HEK293T (cell line): ENCODE measurements at regions of chr19 and their contacts with region 1.

Region 1: DNA sequence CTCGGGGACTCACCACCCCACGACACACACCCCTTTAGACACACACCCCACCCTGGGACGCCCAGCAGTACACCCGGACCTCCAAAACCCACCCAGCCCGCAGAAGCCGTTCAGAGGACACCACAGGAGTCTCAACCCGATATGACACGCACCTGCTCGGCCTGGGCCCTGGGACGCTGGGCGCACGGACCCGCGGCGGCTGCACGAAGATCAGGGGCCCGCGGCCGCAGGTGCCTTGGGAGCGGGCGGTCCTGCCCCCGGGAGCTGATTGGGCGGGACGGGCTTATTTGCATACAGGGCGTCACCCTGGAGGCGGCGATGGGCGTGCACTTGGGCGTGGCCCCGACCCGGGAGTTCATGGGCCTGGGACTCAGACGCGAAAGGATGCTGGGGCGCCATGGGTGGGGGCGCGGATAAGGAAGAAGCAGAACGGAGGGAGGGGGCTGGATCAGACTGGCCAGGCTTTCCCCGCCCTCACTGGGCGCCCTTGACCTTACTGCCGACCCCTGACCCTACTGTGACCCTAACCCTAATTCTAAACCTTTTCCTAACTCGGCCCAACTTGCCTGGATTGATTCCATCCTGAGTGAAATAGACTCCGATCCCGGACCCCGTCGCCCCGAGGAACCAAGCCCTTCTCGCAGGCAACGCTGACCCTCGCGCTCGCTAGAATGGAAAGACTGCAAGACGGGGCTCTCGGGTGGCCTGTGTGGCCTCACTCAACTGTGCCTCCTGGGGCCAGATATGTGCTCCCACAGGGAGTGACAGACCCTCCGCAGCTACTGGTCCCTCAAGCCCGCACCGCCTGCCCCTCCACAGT is at the start of gene MEF2B:
- DNase-seq: peak; percentile 95

Region 2: DNA sequence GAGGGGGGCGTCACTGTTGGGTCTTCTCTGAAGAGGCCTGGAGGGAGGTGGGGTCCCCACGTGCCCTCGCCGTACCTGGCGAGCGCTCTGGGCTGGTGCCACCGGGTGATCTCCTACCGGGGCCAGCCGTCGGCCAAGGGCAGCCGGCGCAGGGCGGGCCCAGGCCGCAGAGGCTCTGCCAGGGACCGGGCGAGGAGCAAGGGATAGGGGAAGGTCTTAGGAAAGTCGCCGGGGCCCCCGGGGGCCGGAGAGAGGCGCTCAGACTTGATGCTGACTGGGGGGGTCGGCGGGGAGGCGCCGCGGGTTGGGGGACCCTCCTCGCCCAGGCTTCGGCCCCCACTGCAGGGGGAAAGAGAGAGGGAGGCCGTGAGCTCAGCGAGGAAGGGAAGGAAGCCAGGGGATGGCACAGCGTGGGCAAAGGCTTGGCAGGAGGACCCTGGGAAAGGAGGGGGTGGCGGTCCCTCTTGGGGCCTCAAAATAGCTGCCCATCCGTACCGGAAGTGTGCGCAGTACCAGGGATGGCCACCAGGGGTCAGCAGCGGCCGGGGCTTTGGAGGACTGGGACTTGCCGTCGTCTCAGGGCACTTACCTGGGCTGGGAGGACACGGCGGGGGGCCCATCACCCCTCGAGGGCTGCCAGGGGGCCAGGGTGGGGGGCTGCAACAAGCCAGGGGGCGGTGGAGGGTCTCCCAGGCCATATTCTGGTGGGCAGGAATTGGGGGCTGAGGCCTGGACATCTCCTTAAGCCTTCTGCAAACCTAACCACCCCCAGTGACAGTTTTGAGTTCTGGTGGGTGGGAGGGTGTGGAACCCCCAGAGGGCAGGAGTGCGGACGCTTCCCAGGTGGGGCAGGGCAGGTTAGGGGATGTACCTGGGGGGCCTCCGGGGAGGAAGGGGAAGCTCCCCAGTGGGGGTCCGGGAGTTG is 24.3 kb before region 1 on chr19:
- CTCF ChIA-PET with region 1: interaction called, 12 read pairs
- POLR2A ChIA-PET with region 1: interaction called, 4 read pairs
- DNase-seq: peak; percentile 82

Region 3: DNA sequence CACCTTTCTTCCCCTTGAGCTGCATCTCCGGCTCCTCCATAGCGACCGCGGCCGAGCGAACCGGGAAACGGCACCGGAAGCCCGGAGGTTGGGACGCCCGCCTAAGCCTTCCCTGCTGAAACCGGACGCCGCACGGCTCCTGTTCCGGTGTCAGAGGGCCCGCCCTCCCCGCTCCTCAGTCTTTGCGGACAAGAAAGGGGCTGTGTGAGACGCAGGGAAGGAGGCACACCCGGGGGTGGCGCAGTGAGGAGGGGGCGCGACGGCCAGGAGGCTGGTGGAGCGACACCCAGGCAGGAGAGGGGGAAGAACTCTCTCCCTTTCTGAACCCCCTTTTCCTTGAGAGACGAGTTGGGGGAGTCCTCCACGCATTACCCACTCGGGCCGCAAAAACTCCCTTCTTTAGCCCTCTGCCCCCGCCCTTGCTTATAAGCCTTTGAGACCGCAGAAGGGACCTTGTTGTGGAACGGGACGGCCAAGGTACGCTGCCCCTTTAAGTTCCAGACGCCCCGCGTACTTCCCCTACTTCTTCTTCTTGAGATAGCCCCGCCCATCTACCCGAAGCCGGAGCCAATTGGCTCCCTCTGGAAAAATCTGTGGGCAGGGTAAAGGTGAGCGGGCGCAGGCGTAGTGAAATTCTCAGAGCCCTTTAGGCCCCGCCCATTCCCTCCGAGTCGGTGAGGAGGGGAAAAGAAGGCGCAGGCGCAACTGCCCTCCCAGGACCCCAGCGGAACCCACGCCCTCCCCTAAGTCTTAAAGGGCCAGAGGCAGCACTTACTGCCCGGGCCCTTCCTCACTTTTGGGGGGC is 22.0 kb after region 1 on chr19 and contains the starts of genes BORCS8 and RFXANK:
- CTCF ChIA-PET with region 1: interaction called, 11 read pairs
- POLR2A ChIA-PET with region 1: no interaction called
- DNase-seq: peak; percentile 95